Aorta (tissue), 5 donors: ENCODE measurements at regions of chr11 and their contacts with region 1.

Region 1: DNA sequence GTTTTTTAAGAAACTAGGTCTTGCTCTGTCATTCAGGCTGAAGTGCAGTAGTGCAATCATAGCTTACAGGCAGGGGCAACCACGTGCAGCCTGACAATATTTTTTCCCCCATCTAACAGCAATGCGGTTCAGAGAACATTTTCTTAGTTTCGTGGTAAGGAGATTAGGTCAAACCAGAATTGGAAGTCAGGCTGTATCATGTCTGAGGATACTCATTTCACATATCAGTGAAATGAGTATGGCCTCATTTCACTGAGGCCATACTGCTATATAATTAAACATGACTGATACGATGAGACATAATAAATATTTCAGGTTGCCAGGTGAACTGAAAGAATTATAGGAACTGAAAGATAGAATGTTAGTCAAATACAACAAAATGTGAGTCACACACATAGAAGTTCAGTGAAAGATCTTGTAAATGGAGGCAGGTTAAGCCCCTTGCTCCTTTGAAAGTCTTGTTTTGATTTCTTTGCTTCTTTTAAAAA is 32.5 kb upstream of the IZUMO1R start:
- DNase-seq: no peak
- ATAC-seq: no peak
- H3K4me3 ChIP-seq: no peak overlapping the region
- H3K27ac ChIP-seq: no peak overlapping the region
- H3K4me1 ChIP-seq: no peaks in the 10 kb centered on the region
- H3K27me3 ChIP-seq: no peaks in the 10 kb centered on the region

Region 2: GRCh38 chr11:94379613-94380012 is 107.7 kb after region 1 on chr11:
- intact Hi-C with region 1: loop called in 1 of 2 experiments (anchors 10 kb)
- DNase-seq: no peak
- ATAC-seq: no peak
- H3K4me3 ChIP-seq: no peak overlapping the region
- H3K27ac ChIP-seq: no peak overlapping the region
- H3K4me1 ChIP-seq: no peaks in the 10 kb centered on the region
- H3K27me3 ChIP-seq: no peaks in the 10 kb centered on the region